Activated T-helper 2 cell treated with anti-CD3 and anti-CD28 coated beads, Interferon-gamma antibody, Interleukin-2, Interleukin-4, amounts not matched to agents 10 μg/mL and 5 μg/mL and 100 μg/mL, durations not matched to agents 14 hours and 24 hours and 36 hours (primary cell): ENCODE measurements at regions of chr12 and their contacts with region 1.

Region 1: DNA sequence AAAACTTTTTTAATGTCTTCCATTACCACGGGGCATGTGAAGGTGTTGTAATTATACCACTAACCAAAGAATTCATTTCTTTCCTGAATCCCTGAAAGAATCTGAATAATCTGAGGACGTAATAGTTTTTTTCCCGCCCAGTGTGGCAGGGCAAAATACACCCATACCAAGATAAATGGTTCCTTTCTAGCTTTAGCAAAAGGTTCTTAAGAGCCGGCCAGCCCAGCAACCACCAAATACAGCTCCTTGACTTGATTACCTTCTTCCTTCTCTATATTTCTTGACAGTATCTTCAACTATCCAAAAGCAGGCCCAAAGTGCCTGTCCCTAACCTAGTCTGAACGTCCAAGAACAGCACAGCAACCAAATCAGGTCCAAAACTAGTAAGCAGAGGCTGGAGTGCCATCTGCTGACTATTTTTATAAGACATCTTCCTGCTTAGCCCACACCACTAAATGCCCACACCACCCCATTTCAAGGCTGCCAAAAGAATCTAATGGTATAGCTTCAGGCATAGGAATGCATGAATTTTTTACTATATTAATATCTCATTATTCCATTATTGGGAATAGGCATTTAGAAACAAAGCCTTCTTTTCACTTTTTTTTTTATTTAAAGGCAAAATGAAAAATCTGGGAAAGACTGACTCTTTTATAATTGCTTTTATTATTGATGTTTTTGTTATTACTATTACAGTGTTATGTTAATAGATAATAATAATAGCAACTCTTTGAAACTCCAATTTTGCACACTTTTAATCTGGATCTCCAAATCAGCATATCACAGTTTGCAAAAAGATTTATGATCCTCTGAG is 524.4 kb downstream of the MED13L start:
- DNase-seq: no peak
- H3K4me3 Mint-ChIP-seq: no peak overlapping the region
- H3K27ac Mint-ChIP-seq: no peak overlapping the region
- H3K4me1 Mint-ChIP-seq: no peaks in the 10 kb centered on the region
- H3K27me3 Mint-ChIP-seq: peaks cover 5% of the 10 kb centered on the region

Region 2: DNA sequence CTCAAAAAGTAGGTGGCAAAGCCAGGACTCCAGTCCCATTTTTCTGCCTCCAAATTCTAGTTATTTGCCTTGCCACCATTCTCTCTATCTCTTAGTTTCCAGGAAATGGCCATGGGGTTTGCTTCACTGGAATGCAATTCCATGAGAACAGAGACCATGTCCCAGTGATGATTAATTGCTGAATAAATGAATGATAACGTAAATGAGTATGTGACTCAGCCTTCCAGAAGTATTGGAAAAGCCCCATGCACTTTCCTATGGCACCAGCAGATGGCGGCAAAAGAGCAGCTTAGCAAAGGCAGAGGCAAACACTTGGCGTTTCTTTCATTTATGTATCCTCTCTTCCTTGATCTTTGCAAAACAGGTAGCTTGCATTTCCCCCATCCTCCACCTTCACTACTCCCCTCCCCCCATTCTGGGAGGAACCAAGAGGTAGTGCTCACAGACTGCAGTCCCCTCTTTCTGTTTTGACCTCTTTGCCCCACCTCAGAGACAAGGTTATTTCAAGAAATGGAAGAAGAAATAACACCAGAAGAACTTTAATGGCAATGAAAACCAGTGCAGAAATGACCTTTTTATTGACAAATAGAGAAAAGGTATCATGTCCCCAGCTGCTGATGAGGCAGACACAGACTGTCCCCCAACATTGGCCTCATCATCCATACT is 1090.5 kb before region 1 on chr12:
- intact Hi-C with region 1: loop called (anchors 2 kb)
- DNase-seq: peak; percentile 24
- H3K4me3 Mint-ChIP-seq: no peak overlapping the region
- H3K27ac Mint-ChIP-seq: no peak overlapping the region
- H3K4me1 Mint-ChIP-seq: no peaks in the 10 kb centered on the region
- H3K27me3 Mint-ChIP-seq: peaks cover 43% of the 10 kb centered on the region